Sigmoid colon (tissue), 7 donors: ENCODE measurements at regions of chr3 and their contacts with region 1.

Region 1: DNA sequence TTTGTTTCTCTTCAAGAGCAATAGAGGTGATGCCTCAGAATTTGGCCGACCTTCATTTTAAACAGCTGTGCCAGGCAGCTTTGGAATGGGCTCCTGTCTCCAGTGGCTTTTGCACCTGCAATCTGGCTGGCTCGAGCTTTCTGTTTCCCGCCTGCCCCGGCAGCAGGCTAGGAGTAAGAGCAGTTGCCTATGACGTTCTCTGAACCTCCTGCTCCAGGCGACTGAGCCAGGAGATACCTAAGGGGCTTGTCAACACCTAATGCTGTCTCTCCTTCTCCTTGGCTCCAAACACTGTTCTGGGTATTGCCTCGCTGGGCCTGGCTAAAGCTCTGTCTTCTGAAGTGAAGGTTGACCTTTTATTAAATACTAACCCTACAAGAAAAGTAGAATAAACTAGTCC is 229.9 kb downstream of the LRRN1 start:
- DNase-seq: no peak
- H3K4me3 ChIP-seq: no peak overlapping the region
- H3K27ac ChIP-seq: no peak overlapping the region
- H3K4me1 ChIP-seq: no peaks in the 10 kb centered on the region
- H3K27me3 ChIP-seq: no peaks in the 10 kb centered on the region
- CTCF ChIP-seq: no peak
- EP300 ChIP-seq: no peak
- POLR2A ChIP-seq: no peak

Region 2: DNA sequence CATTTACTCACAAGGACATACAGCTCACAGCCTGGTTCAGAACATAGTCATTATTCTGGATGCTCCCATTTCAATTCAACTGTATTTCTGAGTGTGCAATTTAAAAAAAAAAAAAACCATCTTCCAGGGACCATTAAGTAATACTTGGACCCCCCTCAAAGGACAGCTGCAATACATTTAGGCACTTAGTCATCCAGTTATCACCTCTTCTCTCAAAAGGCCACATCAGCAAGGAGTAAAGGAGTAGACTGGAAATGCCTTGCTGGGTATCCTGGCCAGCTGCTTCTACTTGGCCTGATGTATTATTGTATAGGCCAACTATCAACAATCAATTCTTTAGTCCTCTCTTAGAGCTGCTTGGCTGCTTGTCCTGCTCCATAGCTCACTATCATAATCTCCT is 62.7 kb after region 1 on chr3:
- intact Hi-C with region 1: loop called (anchors 2 kb)
- DNase-seq: no peak
- H3K4me3 ChIP-seq: no peak overlapping the region
- H3K27ac ChIP-seq: no peak overlapping the region
- H3K4me1 ChIP-seq: no peaks in the 10 kb centered on the region
- H3K27me3 ChIP-seq: no peaks in the 10 kb centered on the region
- CTCF ChIP-seq: no peak
- EP300 ChIP-seq: no peak
- POLR2A ChIP-seq: no peak